Heart left ventricle (tissue), 16 donors: ENCODE measurements at regions of chr2 and their contacts with region 1.

Region 1: DNA sequence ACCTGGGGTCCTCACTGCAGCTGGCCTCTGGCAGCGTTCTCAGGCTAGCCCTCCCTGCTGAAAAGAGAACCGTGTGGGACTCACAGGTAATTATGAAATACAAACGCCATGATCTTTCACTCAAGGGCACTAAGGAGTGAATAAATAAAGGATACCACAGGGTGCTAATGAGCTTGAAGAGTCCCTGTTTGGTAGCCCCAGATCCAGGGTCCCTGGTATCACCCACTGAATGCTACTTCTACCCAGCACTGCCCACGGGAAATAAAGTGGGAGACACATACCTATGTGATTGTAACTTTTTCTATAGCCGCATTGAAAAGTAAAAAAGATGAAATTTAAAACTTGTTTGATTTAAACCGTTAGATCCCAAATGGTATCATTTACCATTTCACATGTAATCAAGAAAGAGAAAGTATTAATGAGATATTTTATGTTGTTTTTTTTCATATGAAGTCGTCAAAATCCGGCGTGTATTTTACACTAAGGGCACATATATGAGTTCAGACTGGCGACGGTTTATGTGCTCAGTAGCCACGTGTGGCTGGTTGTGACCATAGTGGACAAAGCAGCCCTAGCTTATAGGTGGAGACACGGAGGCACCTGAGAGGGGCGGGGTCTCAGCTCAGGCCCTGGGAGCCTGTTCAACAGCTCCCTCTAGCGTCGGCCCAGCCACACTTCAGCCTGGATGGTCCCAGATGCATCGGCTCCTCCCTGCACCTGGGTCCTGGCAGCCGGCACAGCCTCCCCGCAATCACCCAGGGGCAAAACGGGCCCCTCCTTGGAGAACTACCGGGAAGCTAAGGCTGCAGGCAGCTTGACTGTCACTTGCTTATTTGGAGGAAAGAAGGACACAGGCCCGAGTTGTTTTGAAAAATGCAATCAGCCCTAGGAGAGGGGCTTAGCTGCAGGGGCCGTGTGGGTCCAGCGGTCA is 39.2 kb downstream of the ODC1 start:
- DNase-seq: peak; percentile 74 to 88 (median 80)
- ATAC-seq: peak; percentile 51 to 75 (median 62)
- H3K4me3 ChIP-seq: peak overlapping the region in 1 of 12 donors; percentile 15
- H3K27ac ChIP-seq: peak overlapping the region in 10 of 12 donors; percentile 14 to 85 (median 46)
- H3K4me1 ChIP-seq: peaks cover 16 to 71% (median 54%) of the 10 kb centered on the region in 12 donors
- H3K27me3 ChIP-seq: no peaks in the 10 kb centered on the region
- CTCF ChIP-seq: peak; percentile 89 to 98 (median 95)
- POLR2A ChIP-seq: no peak

Region 2: DNA sequence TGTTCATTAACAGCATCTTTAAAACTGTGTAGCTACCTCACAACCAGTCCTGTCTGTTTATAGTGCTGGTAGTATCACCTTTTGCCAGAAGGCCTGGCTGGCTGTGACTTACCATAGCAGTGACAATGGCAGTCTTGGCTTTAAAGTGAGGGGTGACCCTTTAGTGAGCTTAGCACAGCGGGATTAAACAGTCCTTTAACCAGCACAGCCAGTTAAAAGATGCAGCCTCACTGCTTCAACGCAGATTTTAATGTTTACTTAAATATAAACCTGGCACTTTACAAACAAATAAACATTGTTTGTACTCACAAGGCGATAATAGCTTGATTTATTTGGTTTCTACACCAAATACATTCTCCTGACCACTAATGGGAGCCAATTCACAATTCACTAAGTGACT is 279.4 kb before region 1 on chr2:
- intact Hi-C with region 1: loop called in 6 of 10 experiments (anchors 2 to 5 kb)
- DNase-seq: no peak
- ATAC-seq: no peak
- H3K4me3 ChIP-seq: no peak overlapping the region
- H3K27ac ChIP-seq: no peak overlapping the region
- H3K4me1 ChIP-seq: peaks cover 0 to 22% (median 0%) of the 10 kb centered on the region in 12 donors
- H3K27me3 ChIP-seq: no peaks in the 10 kb centered on the region
- CTCF ChIP-seq: no peak
- POLR2A ChIP-seq: no peak

Region 3: DNA sequence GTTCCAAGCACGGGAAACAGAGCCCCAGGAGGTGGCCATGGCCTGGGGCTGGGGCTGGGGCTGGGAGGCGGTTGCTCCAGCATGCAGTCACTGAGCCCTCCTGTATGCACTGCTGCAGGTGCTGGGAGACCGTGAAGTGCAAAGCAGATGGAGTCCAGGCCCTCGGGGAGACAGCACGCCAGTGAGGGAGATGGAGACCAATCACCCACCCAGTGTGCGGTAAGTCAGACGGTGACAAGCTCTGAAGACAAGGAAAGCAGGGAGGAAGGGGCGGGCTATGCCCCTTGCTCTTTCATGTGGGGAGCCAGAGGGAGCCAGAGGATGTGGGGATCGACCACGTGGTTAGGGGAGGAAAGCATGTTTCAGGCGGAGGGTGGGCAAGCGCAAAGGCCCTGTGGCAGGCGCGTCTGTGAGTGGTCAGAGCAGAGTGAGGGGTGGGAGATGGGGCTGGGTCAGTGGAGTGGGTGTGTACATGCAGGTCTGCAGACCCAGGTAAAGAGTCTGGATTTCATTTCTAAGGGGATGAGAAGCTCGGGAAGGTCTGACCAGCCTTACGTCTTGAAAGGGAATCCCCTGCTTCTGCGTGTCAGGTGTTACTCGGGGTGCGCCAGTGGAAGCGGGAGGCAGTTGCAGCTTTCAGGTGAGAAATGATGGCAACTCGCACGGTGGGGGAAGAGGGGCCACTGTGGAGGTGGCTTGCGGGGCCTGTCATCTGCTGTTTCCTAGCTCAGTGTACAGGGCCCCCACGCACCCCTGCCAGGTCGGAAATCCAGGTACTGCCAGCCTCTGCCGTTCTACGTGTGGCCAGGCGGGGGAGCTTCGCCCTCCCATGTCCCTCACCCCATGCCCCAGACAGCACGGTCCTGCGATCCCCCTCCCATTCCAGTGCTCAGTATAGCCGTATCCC is 266.9 kb before region 1 on chr2:
- intact Hi-C with region 1: loop called in 7 of 10 experiments (anchors 1 to 5 kb)
- DNase-seq: no peak
- ATAC-seq: peak in 3 of 4 donors; percentile 36 to 48 (median 47)
- H3K4me3 ChIP-seq: no peak overlapping the region
- H3K27ac ChIP-seq: no peak overlapping the region
- H3K4me1 ChIP-seq: peaks cover 0 to 15% (median 9%) of the 10 kb centered on the region in 12 donors
- H3K27me3 ChIP-seq: no peaks in the 10 kb centered on the region
- CTCF ChIP-seq: peak; percentile 24 to 65 (median 48)
- POLR2A ChIP-seq: no peak

Region 4: DNA sequence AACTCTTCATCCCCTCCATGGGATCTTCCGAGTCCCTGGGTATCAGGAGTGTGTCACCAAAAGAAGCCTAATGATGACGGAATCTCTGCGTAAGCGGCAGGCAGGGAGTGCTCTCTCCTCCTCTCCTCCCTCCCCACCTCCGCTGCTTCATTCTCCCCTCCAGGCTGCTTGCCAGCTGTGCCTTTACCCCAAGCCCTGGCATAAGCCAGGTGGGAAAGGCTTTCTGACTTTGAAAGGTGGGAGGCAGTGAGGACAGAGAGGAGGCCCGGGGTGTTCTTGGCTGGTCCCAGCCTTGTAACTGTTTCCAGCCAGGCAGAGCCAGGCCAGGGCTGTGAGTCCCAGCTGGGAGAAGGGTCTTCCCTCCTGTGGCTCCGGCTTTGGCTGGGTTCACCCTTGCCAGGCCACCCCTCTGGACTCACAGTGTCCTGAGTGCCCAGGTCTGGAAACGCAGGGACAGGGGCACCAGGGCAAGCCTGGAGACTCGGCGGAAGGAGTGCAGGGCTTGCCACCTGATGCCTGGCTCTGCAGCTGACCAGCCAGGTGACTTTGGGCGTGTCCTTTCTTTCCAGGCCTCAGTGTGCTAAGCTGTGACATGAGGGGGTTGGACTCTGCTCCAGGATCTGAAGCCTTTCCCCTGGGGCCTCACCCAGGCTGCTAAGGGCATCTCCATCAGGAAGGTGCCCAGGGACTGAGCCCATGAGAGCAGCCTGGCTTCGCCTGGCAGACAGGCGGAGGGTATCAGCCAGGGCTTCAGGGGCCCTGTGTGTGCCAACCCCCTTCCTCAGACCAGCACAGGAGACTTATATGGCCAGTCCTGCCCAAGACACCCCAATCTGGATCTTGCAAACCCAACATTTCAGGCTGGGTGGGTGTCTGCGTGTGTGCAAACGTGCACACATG is 139.0 kb before region 1 on chr2:
- intact Hi-C with region 1: loop called in 2 of 10 experiments (anchors 1 to 10 kb)
- DNase-seq: no peak
- ATAC-seq: no peak
- H3K4me3 ChIP-seq: no peak overlapping the region
- H3K27ac ChIP-seq: no peak overlapping the region
- H3K4me1 ChIP-seq: peaks cover 0 to 12% (median 2%) of the 10 kb centered on the region in 12 donors
- H3K27me3 ChIP-seq: no peaks in the 10 kb centered on the region
- CTCF ChIP-seq: no peak
- POLR2A ChIP-seq: no peak

Region 5: GRCh38 chr2:10302479-10303180 is 106.3 kb before region 1 on chr2 and contains the start of gene HPCAL1:
- intact Hi-C with region 1: loop called in 9 of 10 experiments (anchors 1 to 10 kb)
- DNase-seq: peak; percentile 88 to 94 (median 91)
- ATAC-seq: peak; percentile 68 to 94 (median 91)
- H3K4me3 ChIP-seq: peak within 1 kb of the TSS; percentile 57 to 96 (median 89)
- H3K27ac ChIP-seq: peak within 1 kb of the TSS; percentile 49 to 90 (median 82)
- H3K4me1 ChIP-seq: peaks cover 2 to 62% (median 38%) of the 10 kb centered on the region in 12 donors
- H3K27me3 ChIP-seq: no peaks in the 10 kb centered on the region
- CTCF ChIP-seq: peak; percentile 43 to 91 (median 72)
- POLR2A ChIP-seq: peak; percentile 83 to 96
- total RNA-seq, gene HPCAL1: 18.9 to 63.2 (median 40.5) TPM

Region 6: DNA sequence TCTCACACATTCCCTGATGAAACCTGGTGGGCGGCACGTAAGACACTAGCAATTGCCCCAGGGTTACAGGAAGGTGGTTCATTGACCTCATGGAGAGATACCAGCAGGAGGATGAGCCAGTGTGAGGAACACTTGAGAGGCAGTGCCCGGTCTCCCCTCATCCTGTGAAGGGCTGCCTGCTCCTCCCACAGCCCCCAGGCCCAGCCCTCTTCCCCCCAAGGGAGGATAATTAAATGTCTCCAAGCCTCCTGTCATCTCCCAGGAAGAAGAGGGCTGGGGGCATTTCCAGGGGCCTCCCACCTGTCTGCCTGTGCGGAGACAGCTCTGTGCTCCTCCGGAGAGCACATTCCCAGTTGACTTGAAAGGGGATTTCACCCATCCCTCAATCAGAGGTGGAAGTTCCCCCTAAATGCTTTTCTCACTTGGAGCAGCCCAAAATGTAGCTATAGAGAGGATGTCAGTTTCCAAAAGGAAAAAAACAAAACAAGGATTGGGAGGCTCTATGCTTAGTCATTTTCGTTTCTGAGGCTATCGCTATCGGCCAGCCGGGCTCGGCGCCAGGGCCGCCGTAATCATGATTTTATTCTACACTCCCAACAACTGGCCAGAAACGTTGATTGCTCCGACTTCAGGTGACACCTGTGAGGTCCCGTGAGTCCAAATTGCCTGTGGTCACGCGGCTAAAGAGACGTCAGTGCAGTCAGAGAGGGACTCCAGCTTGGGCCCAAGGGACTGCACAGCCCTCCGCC is 509.9 kb after region 1 on chr2:
- intact Hi-C with region 1: no loop called
- DNase-seq: peak in 1 of 5 donors; percentile 39
- ATAC-seq: peak in 3 of 4 donors; percentile 8 to 28 (median 18)
- H3K4me3 ChIP-seq: peak overlapping the region in 5 of 12 donors; percentile 6 to 37 (median 19)
- H3K27ac ChIP-seq: no peak overlapping the region
- H3K4me1 ChIP-seq: peaks cover 0 to 14% (median 0%) of the 10 kb centered on the region in 12 donors
- H3K27me3 ChIP-seq: peaks cover 0 to 18% (median 0%) of the 10 kb centered on the region in 9 donors
- CTCF ChIP-seq: no peak
- POLR2A ChIP-seq: no peak